ENCODE measurements at regions of chr21 and their contacts with region 1.

Region 1: GRCh38 chr21:33924079-33924765 is 8.6 kb upstream of the ATP5PO start:
- DNase-seq: peak; percentile 90
- ATAC-seq: peak; percentile 96
- H3K4me3 ChIP-seq: no peak overlapping the region
- H3K27ac ChIP-seq: no peak overlapping the region
- H3K4me1 ChIP-seq: peaks cover 11% of the 10 kb centered on the region
- H3K27me3 ChIP-seq: no peaks in the 10 kb centered on the region
- CTCF ChIP-seq: peak; percentile 96

Region 2: GRCh38 chr21:33947451-33948095 is 23.4 kb after region 1 on chr21:
- CTCF ChIA-PET with region 1: interaction called, 6 read pairs
- POLR2A ChIA-PET with region 1: interaction called, 19 read pairs
- intact Hi-C with region 1: no loop called
- DNase-seq: peak; percentile 99
- ATAC-seq: peak; percentile 94
- H3K4me3 ChIP-seq: peak overlapping the region; percentile 61
- H3K27ac ChIP-seq: peak overlapping the region; percentile 90
- H3K4me1 ChIP-seq: peaks cover 21% of the 10 kb centered on the region
- H3K27me3 ChIP-seq: no peaks in the 10 kb centered on the region
- CTCF ChIP-seq: no peak

Region 3: DNA sequence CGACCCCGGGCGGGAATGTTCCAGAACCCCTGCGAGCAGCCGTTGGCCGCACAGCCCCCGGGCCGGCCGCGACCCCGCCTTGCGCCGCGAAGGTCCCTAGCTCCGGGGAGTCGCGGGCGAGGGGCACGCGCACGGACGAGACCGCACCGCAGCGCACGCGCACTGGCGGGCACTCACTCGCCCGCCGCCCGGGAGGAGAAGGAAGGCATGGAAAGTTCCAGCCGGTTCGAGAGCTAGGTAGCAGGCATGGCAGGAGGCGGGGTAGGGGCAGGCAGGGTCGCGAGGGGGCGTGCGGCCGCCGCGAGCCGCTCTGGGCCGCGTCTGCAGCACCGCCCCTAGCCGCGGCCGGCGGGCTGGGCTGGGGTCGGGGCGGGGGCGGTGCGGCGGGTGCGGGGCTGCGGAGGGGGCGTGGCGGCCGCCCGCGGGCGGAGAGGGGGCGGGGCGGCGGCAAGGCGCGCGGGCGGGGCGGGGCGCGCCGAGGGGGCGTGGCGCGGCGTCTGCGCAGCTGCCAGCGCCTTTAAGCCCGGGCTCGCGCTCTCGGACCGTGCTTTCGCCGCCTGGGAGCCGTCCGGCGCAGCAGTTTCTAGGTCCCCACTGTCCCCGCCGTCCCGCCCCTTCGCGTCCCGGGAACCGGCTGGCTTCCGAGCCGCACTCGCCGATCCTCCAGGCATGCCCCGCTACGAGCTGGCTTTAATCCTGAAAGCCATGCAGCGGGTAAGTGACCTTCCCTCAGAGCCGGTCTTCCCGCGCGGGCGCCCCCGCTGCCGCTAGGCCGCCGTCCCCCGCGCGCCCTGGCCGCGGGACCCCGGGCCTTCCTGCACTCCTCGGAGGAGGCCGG is 149.0 kb after region 1 on chr21 and contains the starts of genes MRPS6 and SLC5A3:
- CTCF ChIA-PET with region 1: no interaction called
- POLR2A ChIA-PET with region 1: no interaction called
- intact Hi-C with region 1: loop called (anchors 2 kb)
- DNase-seq: peak; percentile 83
- ATAC-seq: peak; percentile 82
- H3K4me3 ChIP-seq: peak within 1 kb of the TSS; percentile 78
- H3K27ac ChIP-seq: no peak within 1 kb of the TSS
- H3K4me1 ChIP-seq: peaks cover 41% of the 10 kb centered on the region
- H3K27me3 ChIP-seq: no peaks in the 10 kb centered on the region
- CTCF ChIP-seq: no peak
- total RNA-seq, gene MRPS6: 32.8 and 35.0 TPM in 2 replicates
- total RNA-seq, gene SLC5A3: 13.4 and 13.8 TPM in 2 replicates

Region 4: GRCh38 chr21:34243562-34243961 is 319.3 kb after region 1 on chr21:
- CTCF ChIA-PET with region 1: interaction called, 3 read pairs
- POLR2A ChIA-PET with region 1: no interaction called
- intact Hi-C with region 1: loop called (anchors 5 kb)
- DNase-seq: peak; percentile 52
- ATAC-seq: peak; percentile 50; the same call in 1 of the 2 replicates
- H3K4me3 ChIP-seq: no peak overlapping the region
- H3K27ac ChIP-seq: no peak overlapping the region
- H3K4me1 ChIP-seq: no peaks in the 10 kb centered on the region
- H3K27me3 ChIP-seq: peaks cover 28% of the 10 kb centered on the region
- CTCF ChIP-seq: peak; percentile 67

Region 5: DNA sequence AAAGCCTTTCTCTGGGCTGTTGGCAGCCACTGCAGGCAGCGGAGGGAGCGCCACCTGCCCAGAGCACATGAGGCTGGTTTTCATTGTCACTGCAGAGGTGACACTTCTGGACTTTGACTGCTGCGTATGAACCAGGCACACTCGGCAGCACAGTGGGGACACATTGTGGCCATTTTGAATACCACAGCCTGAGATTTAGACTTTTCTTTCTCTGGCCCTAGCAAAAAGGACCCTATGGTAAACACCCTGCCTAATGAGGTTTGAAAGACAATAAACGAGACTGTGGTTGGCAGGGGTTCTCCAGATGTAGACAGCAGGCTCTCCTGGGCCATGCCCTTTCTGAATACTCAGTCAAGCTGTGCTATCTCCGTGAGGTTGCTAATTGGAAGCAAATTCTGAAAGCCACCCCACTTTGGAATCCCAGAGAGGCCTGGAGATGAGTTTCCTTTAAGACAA is 427.6 kb after region 1 on chr21:
- CTCF ChIA-PET with region 1: interaction called, 50 read pairs
- POLR2A ChIA-PET with region 1: no interaction called
- intact Hi-C with region 1: loop called (anchors 2 kb)
- DNase-seq: peak; percentile 61
- ATAC-seq: peak; percentile 84
- H3K4me3 ChIP-seq: no peak overlapping the region
- H3K27ac ChIP-seq: no peak overlapping the region
- H3K4me1 ChIP-seq: no peaks in the 10 kb centered on the region
- H3K27me3 ChIP-seq: peaks cover 11% of the 10 kb centered on the region
- CTCF ChIP-seq: peak; percentile 77